Gastrocnemius medialis (tissue), 4 donors: ENCODE measurements at regions of chr16 and their contacts with region 1.

Region 1: DNA sequence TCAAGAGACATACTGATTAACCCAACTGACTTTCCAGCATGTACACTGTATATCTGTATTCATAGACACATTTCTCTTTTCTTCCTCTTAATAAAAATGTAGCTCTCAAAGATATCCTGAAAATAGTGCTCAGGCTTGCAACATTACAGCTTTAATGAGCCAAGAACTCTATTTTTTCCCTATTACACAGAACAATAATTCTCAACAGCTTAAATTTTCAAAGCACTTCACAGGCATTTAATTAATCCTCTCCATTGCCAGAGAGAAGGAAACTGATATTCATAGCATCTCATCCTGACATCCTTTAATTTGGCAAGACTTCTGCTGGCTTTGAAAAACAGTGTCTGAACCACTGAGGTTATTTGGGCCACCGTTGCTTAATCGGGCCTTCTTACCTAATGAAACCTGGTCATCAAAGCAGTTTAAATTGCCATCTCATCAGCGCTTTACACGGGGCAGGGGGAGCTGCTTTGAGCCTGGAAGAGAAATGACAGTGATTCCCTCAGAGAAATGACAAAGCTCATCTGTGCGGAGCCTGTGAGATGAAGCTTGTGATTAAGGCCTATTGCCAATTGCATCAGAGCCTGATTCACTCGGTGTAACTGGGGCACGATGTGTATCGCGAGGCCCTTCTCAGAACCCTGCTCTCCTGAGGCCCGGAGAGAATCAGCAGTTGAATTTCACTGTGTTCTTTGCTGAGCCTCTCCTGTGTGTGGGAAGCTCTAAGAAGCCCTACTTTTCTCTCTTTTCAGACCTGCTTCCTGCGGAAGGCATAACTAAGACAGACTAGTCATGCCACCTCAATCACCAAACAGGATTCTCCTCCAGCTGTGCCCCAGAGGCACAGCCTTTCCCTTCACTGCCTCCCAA is 8.5 kb upstream of the SIAH1 start:
- DNase-seq: peak; percentile 87
- ATAC-seq: peak; percentile 97 to 99
- H3K4me3 ChIP-seq: no peak overlapping the region
- H3K27ac ChIP-seq: peak overlapping the region; percentile 86 to 92 (median 88)
- H3K4me1 ChIP-seq: peaks cover 28 to 30% of the 10 kb centered on the region in 2 donors
- H3K27me3 ChIP-seq: no peaks in the 10 kb centered on the region
- CTCF ChIP-seq: no peak
- POLR2A ChIP-seq: peak; percentile 60 to 74

Region 2: DNA sequence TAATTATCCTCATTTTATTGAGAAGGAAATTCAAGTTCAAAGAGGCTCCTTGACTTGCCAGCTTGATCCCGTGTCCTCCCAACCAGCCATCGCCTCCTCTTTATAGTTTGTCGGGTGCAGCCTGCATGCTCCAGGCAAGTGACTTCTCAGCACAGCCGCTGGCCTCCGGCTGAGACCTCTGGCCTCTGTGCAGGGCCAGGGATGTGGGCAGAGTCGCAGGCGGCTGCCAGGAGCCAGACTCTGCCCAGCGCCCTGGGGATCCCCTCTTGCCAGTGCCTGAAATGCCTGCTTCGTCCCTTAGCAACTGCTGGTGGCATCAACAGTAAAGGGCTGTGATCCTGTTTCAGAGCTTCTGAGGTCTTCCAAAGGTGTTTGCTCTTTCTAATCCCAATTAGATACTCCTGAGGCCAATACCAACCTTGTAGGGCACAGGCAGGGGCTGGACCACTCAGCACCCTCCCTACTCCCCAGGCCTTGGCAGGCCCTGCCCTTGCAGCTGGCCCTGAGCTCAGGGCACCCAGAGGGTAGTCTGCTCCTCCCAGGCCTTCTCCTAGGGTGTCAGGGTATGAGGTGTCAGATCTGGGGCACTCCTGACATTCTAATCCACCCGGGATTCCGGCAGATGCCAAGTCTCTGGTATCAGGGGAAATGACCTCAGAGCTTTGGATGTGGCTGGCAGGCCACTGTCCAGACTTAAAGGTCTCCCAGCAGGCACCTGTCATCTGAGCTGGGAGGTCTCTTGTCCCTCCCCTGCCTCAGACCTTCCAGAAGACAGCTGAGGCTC is 59.4 kb after region 1 on chr16:
- in situ Hi-C with region 1: no loop called
- intact Hi-C with region 1: loop called (anchors 2 kb)
- DNase-seq: peak; percentile 16 to 86
- ATAC-seq: peak; percentile 55 to 92
- H3K4me3 ChIP-seq: no peak overlapping the region
- H3K27ac ChIP-seq: peak overlapping the region; percentile 14 to 70 (median 64)
- H3K4me1 ChIP-seq: peaks cover 10 to 17% of the 10 kb centered on the region in 2 donors
- H3K27me3 ChIP-seq: no peaks in the 10 kb centered on the region
- CTCF ChIP-seq: no peak
- POLR2A ChIP-seq: no peak

Region 3: GRCh38 chr16:48470232-48470631 is 76.5 kb after region 1 on chr16:
- in situ Hi-C with region 1: no loop called
- intact Hi-C with region 1: no loop called
- DNase-seq: no peak
- ATAC-seq: no peak
- H3K4me3 ChIP-seq: no peak overlapping the region
- H3K27ac ChIP-seq: no peak overlapping the region
- H3K4me1 ChIP-seq: no peaks in the 10 kb centered on the region
- H3K27me3 ChIP-seq: no peaks in the 10 kb centered on the region
- CTCF ChIP-seq: no peak
- POLR2A ChIP-seq: no peak

Region 4: GRCh38 chr16:48556913-48557351 is 163.2 kb after region 1 on chr16:
- in situ Hi-C with region 1: no loop called
- intact Hi-C with region 1: loop called (anchors 5 kb)
- DNase-seq: no peak
- ATAC-seq: no peak
- H3K4me3 ChIP-seq: no peak overlapping the region
- H3K27ac ChIP-seq: peak overlapping the region in 1 of 4 donors; percentile 7
- H3K4me1 ChIP-seq: peaks cover 75 to 79% of the 10 kb centered on the region in 2 donors
- H3K27me3 ChIP-seq: no peaks in the 10 kb centered on the region
- CTCF ChIP-seq: no peak
- POLR2A ChIP-seq: no peak